ENCODE measurements at regions of chr3 and their contacts with region 1.

Region 1: GRCh38 chr3:189041482-189042090 is 130.2 kb upstream of the TPRG1 start:
- DNase-seq: peak; percentile 43 to 90 (median 69)
- ATAC-seq: peak; percentile 98
- H3K4me3 ChIP-seq: no peak overlapping the region
- H3K4me3 Mint-ChIP-seq: no peak overlapping the region
- H3K27ac ChIP-seq: peak overlapping the region in 1 of 2 experiments; percentile 44
- H3K27ac Mint-ChIP-seq: peak overlapping the region; percentile 72
- H3K4me1 ChIP-seq: peaks cover 3% of the 10 kb centered on the region
- H3K4me1 Mint-ChIP-seq: peaks cover 8% of the 10 kb centered on the region
- H3K27me3 ChIP-seq: no peaks in the 10 kb centered on the region
- H3K27me3 Mint-ChIP-seq: no peaks in the 10 kb centered on the region
- CTCF ChIP-seq: peak; percentile 65

Region 2: DNA sequence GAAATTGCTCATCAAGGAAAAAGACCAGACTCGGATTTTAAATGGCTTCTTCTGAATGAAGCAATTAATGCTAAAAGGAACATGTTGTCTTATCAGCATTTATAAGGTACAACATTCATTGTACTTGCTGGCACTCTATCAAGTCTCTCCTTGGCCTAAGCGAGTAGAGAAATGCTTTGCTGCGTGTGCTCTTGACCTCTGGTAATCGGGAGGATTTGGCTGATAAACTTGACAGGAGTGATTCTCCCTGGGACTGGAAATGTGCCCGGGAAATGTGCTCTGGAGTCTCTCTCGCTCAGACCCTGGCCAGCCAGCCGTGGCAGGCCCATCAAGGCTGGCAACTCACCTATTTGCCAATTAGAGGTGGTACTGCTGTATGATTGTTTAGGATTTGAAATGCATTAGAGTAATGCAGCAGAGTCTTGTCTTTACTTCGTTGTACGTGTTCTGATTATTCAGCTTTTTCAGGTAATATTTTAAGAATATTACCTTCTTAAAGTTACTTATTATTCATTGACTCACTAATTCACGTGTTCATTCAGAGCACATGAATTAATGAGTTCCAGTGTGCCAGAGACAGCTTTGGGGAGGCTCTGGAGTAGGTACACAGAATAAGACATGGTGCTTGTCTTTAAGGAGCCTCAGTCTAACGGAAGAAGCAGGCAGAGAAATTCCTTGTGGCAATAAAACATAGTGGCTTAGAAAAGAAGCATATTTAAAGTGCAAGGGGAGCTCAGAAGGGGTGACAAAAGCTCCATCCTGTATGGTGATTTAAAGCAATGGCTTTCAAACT is 82.2 kb after region 1 on chr3:
- CTCF ChIA-PET with region 1: no interaction called
- POLR2A ChIA-PET with region 1: interaction called, 4 read pairs
- intact Hi-C with region 1: loop called in 1 of 2 experiments (anchors 5 kb)
- DNase-seq: no peak
- ATAC-seq: no peak
- H3K4me3 ChIP-seq: peak overlapping the region in 1 of 2 experiments; percentile 49
- H3K4me3 Mint-ChIP-seq: peak overlapping the region; percentile 77
- H3K27ac ChIP-seq: peak overlapping the region in 1 of 2 experiments; percentile 86
- H3K27ac Mint-ChIP-seq: peak overlapping the region; percentile 47
- H3K4me1 ChIP-seq: peaks cover 7% of the 10 kb centered on the region
- H3K4me1 Mint-ChIP-seq: peaks cover 33% of the 10 kb centered on the region
- H3K27me3 ChIP-seq: no peaks in the 10 kb centered on the region
- H3K27me3 Mint-ChIP-seq: no peaks in the 10 kb centered on the region
- CTCF ChIP-seq: no peak

Region 3: GRCh38 chr3:189132231-189132707 is 90.7 kb after region 1 on chr3:
- CTCF ChIA-PET with region 1: interaction called, 14 read pairs
- POLR2A ChIA-PET with region 1: interaction called, 3 read pairs
- intact Hi-C with region 1: loop called in 1 of 2 experiments (anchors 5 kb)
- DNase-seq: peak; percentile 51 to 93 (median 78)
- ATAC-seq: peak; percentile 92
- H3K4me3 ChIP-seq: peak overlapping the region in 1 of 2 experiments; percentile 4
- H3K4me3 Mint-ChIP-seq: peak overlapping the region; percentile 71
- H3K27ac ChIP-seq: peak overlapping the region; percentile 47 to 86
- H3K27ac Mint-ChIP-seq: peak overlapping the region; percentile 97
- H3K4me1 ChIP-seq: peaks cover 24% of the 10 kb centered on the region
- H3K4me1 Mint-ChIP-seq: peaks cover 30% of the 10 kb centered on the region
- H3K27me3 ChIP-seq: no peaks in the 10 kb centered on the region
- H3K27me3 Mint-ChIP-seq: no peaks in the 10 kb centered on the region
- CTCF ChIP-seq: no peak

Region 4: GRCh38 chr3:189139611-189139940 is 98.0 kb after region 1 on chr3:
- CTCF ChIA-PET with region 1: interaction called, 14 read pairs
- POLR2A ChIA-PET with region 1: interaction called, 6 read pairs
- intact Hi-C with region 1: loop called in 1 of 2 experiments (anchors 1 kb)
- DNase-seq: no peak
- ATAC-seq: no peak
- H3K4me3 ChIP-seq: no peak overlapping the region
- H3K4me3 Mint-ChIP-seq: no peak overlapping the region
- H3K27ac ChIP-seq: no peak overlapping the region
- H3K27ac Mint-ChIP-seq: no peak overlapping the region
- H3K4me1 ChIP-seq: peaks cover 11% of the 10 kb centered on the region
- H3K4me1 Mint-ChIP-seq: peaks cover 21% of the 10 kb centered on the region
- H3K27me3 ChIP-seq: no peaks in the 10 kb centered on the region
- H3K27me3 Mint-ChIP-seq: no peaks in the 10 kb centered on the region
- CTCF ChIP-seq: no peak

Measured in CD8-positive, alpha-beta T cell (primary cell).